HepG2 (cell line): ENCODE measurements at regions of chr10 and their contacts with region 1.

Region 1: DNA sequence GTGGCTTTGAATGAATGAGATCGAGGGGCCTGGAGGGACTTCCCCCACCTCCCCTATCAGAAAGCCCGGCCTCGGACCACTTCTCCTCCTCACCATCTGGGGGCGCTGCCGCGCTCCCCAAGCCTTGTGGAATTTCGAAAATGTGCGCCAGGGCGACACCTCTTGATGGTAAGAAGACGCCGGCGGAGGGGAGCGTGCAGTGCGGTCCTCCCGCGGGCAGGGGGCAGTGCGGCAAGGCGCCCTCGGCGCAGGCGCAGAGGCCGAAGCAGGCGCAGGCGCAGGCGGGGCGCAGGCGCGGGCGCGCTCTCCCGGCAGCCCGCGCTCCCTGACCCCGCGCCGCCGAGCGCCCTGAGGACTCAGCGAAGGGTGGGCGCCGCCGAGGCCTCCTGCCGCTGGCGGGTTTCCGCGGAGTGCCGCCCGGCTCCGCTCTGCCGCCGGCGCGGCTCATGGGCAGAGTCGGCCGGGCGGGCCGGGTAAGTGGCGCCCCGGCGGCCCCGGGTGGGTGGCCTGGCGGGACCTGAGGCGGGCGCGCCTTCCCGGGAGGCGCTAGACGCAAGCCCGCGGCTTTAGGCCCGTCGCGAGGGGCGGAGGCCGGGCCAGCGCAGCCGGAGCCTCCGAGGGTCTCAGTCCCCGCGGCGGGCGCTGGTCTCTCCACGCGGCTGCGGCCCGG is at the start of gene RBM17:
- DNase-seq: peak; percentile 88
- ATAC-seq: peak; percentile 90
- H3K4me3 ChIP-seq: peak within 1 kb of the TSS; percentile 90 to 99 (median 91)
- H3K27ac ChIP-seq: peak within 1 kb of the TSS; percentile 72
- H3K4me1 ChIP-seq: peaks cover 38% of the 10 kb centered on the region
- H3K27me3 ChIP-seq: peaks cover 0 to 4% of the 10 kb centered on the region in 2 experiments; a peak in 2 of 5 replicates
- CTCF ChIP-seq: peak; percentile 96
- EP300 ChIP-seq: peak in 1 of 2 experiments; percentile 43; a peak in 1 of 4 replicates
- POLR2A ChIP-seq: peak; percentile 65 to 66; a peak in 2 of 4 replicates
- RAD21 ChIP-seq: peak; percentile 75
- total RNA-seq, gene RBM17: 63.3 and 77.5 TPM in 2 replicates

Region 2: DNA sequence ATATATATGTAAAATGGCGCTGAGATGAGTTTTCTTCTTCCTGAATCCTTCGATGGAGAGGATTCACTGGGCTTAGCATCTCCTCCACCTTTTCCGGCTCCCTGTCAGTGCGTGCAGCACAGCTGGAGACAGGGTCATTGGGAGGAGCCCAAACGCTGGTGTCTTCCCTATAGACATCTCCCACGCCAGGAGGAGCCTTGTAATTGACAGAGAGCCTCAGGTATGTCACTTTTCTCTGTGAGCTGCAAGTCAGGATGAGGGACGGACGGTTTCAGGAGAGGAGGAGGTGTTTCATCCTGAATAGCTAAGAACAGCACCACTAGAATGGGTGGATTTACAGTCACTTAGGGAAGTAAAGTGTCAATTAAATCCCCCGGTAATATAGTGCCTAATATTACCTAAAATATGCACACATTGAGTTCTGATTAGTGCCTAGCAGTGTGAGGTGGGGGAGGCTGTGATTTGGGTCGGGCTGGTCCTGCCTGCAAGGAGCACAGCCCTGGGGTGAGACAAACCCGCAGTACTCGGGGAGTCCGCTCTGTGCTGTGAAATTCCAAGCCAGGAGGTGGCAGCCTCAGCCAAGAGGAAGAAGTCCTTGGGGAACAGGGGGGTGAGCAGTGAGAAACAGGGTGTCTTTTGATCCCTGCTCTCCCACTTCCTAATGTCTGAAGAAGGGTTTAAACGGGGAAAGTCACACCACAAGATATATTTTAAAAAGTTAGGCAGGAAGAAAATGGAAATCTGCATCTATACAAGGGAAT is 139.7 kb before region 1 on chr10:
- CTCF ChIA-PET with region 1: interaction called, 3 read pairs
- POLR2A ChIA-PET with region 1: no interaction called
- in situ Hi-C with region 1: no loop called
- intact Hi-C with region 1: loop called (anchors 10 kb)
- DNase-seq: peak; percentile 46
- ATAC-seq: peak; percentile 90
- H3K4me3 ChIP-seq: no peak overlapping the region
- H3K27ac ChIP-seq: no peak overlapping the region
- H3K4me1 ChIP-seq: peaks cover 20% of the 10 kb centered on the region
- H3K27me3 ChIP-seq: peaks cover 2 to 45% of the 10 kb centered on the region in 2 experiments; a peak in 4 of 5 replicates
- CTCF ChIP-seq: peak; percentile 83
- EP300 ChIP-seq: no peak
- POLR2A ChIP-seq: no peak
- RAD21 ChIP-seq: peak; percentile 29; the same call in 1 of the 2 replicates

Region 3: GRCh38 chr10:6014241-6014761 is 74.6 kb before region 1 on chr10:
- CTCF ChIA-PET with region 1: no interaction called
- POLR2A ChIA-PET with region 1: no interaction called
- in situ Hi-C with region 1: no loop called
- intact Hi-C with region 1: loop called (anchors 1 kb)
- DNase-seq: peak; percentile 34
- ATAC-seq: peak; percentile 71
- H3K4me3 ChIP-seq: no peak overlapping the region
- H3K27ac ChIP-seq: no peak overlapping the region
- H3K4me1 ChIP-seq: no peaks in the 10 kb centered on the region
- H3K27me3 ChIP-seq: peaks cover 0 to 57% of the 10 kb centered on the region in 2 experiments; a peak in 4 of 5 replicates
- CTCF ChIP-seq: peak; percentile 68
- EP300 ChIP-seq: no peak
- POLR2A ChIP-seq: no peak
- RAD21 ChIP-seq: no peak

Region 4: GRCh38 chr10:6114805-6115341 is 26.0 kb after region 1 on chr10:
- CTCF ChIA-PET with region 1: no interaction called
- POLR2A ChIA-PET with region 1: no interaction called
- in situ Hi-C with region 1: no loop called
- intact Hi-C with region 1: no loop called
- DNase-seq: no peak
- ATAC-seq: no peak
- H3K4me3 ChIP-seq: no peak overlapping the region
- H3K27ac ChIP-seq: no peak overlapping the region
- H3K4me1 ChIP-seq: peaks cover 10% of the 10 kb centered on the region
- H3K27me3 ChIP-seq: no peaks in the 10 kb centered on the region
- CTCF ChIP-seq: no peak
- EP300 ChIP-seq: no peak
- POLR2A ChIP-seq: no peak
- RAD21 ChIP-seq: no peak

Region 5: GRCh38 chr10:6141296-6142151 is 52.7 kb after region 1 on chr10:
- CTCF ChIA-PET with region 1: no interaction called
- POLR2A ChIA-PET with region 1: no interaction called
- in situ Hi-C with region 1: no loop called
- intact Hi-C with region 1: loop called (anchors 2 kb)
- DNase-seq: no peak
- ATAC-seq: peak; percentile 24; the same call in 2 of the 3 replicates
- H3K4me3 ChIP-seq: peak overlapping the region in 2 of 3 experiments; percentile 8 to 25; a peak in 2 of 6 replicates
- H3K27ac ChIP-seq: no peak overlapping the region
- H3K4me1 ChIP-seq: peaks cover 26% of the 10 kb centered on the region
- H3K27me3 ChIP-seq: peaks cover 9 to 72% of the 10 kb centered on the region in 2 experiments; a peak in 3 of 5 replicates
- CTCF ChIP-seq: no peak
- EP300 ChIP-seq: no peak
- POLR2A ChIP-seq: no peak
- RAD21 ChIP-seq: no peak

Region 6: DNA sequence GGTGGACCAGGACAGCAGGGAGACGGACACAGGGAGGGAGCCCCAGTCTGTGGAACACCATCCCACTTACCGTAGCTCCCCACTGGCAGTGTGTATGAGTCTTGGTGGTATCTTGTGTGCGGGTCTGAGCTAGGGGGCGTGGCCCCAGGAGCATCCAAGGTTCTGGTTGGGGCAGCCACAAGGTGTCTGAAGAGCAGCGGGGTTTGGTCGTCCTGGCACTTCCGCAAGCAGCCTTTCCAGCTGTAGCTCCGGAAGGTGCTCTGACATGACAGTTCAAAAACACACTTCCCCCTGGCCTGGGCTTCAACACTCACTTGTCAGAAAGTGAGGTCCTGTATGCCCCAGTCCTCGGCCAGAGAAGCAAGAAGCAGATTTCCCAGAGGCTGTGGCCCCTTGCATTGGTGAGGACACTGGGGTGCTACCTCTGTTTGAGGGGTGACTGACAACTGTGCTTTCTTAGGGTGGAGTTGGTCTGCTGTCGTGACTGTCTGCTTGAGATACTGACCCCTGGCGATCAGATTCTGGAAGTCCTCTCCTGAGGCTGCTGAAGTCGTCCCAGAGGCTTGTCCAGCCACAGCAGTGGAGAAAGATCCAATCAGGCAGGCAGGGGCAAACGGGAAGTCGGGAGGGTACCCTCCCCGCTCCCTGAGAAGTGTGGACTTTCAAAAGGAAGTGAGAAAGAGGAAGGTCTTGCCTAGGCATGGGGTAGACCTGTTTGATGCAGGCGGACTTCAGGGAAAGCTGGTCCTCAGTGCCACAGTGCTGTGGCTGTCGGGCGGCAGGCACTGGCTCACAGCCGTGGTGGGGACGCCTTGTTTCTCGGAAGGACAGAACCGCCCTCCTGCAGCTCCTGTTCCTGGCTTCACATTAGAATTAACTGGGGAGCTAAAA is 62.5 kb after region 1 on chr10:
- CTCF ChIA-PET with region 1: interaction called, 3 read pairs
- POLR2A ChIA-PET with region 1: no interaction called
- in situ Hi-C with region 1: no loop called
- intact Hi-C with region 1: loop called (anchors 2 kb)
- DNase-seq: peak; percentile 36
- ATAC-seq: peak; percentile 81
- H3K4me3 ChIP-seq: no peak overlapping the region
- H3K27ac ChIP-seq: no peak overlapping the region
- H3K4me1 ChIP-seq: peaks cover 26% of the 10 kb centered on the region
- H3K27me3 ChIP-seq: peaks cover 0 to 6% of the 10 kb centered on the region in 2 experiments; a peak in 3 of 5 replicates
- CTCF ChIP-seq: peak; percentile 76
- EP300 ChIP-seq: no peak
- POLR2A ChIP-seq: no peak
- RAD21 ChIP-seq: no peak

Region 7: GRCh38 chr10:6202684-6203330 is 114.0 kb after region 1 on chr10 and contains the start of gene PFKFB3:
- CTCF ChIA-PET with region 1: interaction called, 5 read pairs
- POLR2A ChIA-PET with region 1: no interaction called
- in situ Hi-C with region 1: no loop called
- intact Hi-C with region 1: loop called (anchors 1 kb)
- DNase-seq: peak; percentile 81
- ATAC-seq: peak; percentile 86
- H3K4me3 ChIP-seq: peak within 1 kb of the TSS; percentile 64 to 93 (median 79)
- H3K27ac ChIP-seq: no peak within 1 kb of the TSS
- H3K4me1 ChIP-seq: peaks cover 36% of the 10 kb centered on the region
- H3K27me3 ChIP-seq: peaks cover 0 to 11% of the 10 kb centered on the region in 2 experiments; a peak in 1 of 5 replicates
- CTCF ChIP-seq: peak; percentile 89
- EP300 ChIP-seq: no peak; a peak in 1 of 4 replicates
- POLR2A ChIP-seq: peak in 1 of 2 experiments; percentile 92; a peak in 2 of 4 replicates
- RAD21 ChIP-seq: peak; percentile 93
- total RNA-seq, gene PFKFB3: 0.87 and 1.2 TPM in 2 replicates